ENCODE measurements at regions of chr4 and their contacts with region 1.

Region 1: DNA sequence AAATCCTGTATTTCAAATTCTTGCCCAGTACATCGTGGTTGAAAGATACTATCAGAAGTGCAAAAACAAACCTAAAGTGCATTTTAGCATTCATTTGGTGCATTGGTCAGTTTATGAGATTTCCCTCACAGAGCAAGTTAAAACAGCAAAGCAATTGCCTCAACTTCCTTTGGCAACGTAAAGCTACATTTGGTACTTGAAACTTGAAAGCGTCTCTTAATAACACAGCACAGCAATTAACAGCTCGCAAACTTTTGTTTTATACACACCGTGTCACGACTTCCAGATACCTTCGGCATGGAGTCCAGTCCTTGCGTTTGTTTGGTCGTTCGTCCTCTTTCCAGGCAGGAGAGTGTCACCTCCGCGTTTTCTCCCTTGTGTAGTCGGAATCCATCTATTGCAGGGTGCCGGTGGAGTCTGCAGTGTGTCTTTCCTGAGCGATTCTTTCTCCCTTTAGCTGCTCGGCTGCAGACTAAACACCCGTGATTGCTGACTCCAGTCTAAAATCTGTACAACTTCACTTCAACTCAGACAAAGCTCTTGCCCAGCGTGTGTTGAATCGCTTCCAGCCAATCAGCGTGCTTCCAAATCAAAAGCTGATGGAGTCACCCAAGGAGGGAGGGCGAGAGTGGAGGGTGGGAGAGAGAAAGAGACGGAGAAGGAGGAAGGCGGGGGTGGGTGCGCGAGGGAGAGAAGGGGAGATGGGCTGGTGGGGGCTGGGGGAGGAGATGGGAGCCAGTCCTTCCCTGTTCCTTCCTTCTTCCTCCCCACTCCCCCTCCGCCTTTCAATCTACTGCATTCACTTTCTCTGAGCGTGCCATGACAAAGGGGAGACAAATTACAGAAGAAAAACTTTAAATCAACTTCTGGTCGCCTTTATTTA is at the start of gene PCDH18:
- DNase-seq: peak; percentile 76
- H3K4me3 ChIP-seq: peak within 1 kb of the TSS; percentile 38 to 40
- H3K27ac ChIP-seq: peak within 1 kb of the TSS; percentile 59 to 77
- H3K4me1 ChIP-seq: no peaks in the 10 kb centered on the region
- H3K27me3 ChIP-seq: no peaks in the 10 kb centered on the region
- CTCF ChIP-seq: no peak
- POLR2A ChIP-seq: peak; percentile 29
- total RNA-seq, gene PCDH18: 12.3 to 28.0 TPM

Region 2: DNA sequence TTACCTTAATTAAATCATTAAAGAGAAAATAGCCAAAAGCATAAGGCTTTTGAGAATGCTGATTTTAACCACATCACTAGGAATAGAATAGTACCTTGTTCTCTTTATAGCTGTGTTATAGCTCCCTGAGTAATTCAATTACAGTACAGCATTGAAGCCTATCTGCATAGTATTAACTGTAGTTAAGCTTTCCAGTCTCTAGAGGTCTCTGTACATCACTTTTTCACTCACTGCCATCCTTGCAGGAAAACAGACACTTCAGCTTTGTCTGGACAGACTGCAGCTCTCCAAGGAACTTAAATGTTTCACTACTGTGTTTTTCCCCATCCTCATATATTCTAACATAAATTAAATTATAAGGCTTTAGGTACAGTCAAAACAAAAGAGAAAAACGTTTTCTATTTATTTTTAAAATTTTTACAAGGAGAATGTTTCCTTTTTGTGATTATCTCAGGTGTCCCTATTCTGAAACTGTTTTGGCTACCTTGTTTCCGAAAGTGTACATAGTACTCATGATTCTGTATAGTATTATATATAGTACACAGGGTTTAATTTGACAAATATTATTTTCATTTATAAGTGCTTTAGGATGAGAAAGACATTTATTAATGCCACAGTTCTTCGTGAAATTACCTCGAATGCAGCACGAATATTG is 407.8 kb before region 1 on chr4:
- intact Hi-C with region 1: loop called (anchors 10 kb)
- DNase-seq: no peak
- H3K4me3 ChIP-seq: peak overlapping the region in 1 of 2 donors; percentile 10
- H3K27ac ChIP-seq: no peak overlapping the region
- H3K4me1 ChIP-seq: no peaks in the 10 kb centered on the region
- H3K27me3 ChIP-seq: no peaks in the 10 kb centered on the region
- CTCF ChIP-seq: peak in 3 of 4 experiments; percentile 40 to 54 (median 53)
- POLR2A ChIP-seq: no peak

Region 3: GRCh38 chr4:137283737-137284136 is 248.5 kb before region 1 on chr4:
- intact Hi-C with region 1: loop called (anchors 10 kb)
- DNase-seq: no peak
- H3K4me3 ChIP-seq: no peak overlapping the region
- H3K27ac ChIP-seq: no peak overlapping the region
- H3K4me1 ChIP-seq: no peaks in the 10 kb centered on the region
- H3K27me3 ChIP-seq: no peaks in the 10 kb centered on the region
- CTCF ChIP-seq: peak in 2 of 4 experiments; percentile 17 to 25
- POLR2A ChIP-seq: no peak

Region 4: DNA sequence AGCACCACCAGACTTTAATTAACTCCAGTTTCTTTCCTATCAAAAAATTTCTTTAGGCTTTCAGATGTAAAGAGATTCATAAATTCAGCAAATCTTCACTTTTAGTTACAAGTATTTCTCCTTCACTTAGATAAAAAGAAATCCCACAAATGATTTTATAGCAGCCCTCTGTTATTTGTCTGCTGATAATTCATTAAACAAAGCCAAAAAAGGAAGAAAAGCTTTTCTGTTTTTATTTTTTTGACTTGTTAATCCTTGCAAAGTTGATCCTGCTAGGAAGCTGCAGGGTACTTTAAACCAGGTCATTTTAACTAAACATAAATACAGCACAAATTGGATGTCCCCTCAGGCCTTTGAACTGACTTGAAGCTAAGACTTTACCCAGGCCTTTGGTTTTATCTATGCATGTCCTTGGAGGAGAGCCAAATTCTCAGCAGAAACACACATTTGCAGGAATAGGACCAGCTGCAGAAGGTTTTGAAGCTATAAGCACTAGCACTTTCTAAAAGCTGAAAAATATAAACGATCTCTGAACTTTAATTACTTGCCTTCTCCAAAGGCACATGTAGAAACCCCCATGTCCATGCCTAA is 57.4 kb before region 1 on chr4:
- intact Hi-C with region 1: no loop called
- DNase-seq: no peak
- H3K4me3 ChIP-seq: no peak overlapping the region
- H3K27ac ChIP-seq: no peak overlapping the region
- H3K4me1 ChIP-seq: no peaks in the 10 kb centered on the region
- H3K27me3 ChIP-seq: no peaks in the 10 kb centered on the region
- CTCF ChIP-seq: no peak
- POLR2A ChIP-seq: no peak

Region 5: GRCh38 chr4:137664046-137664387 is 131.8 kb after region 1 on chr4:
- intact Hi-C with region 1: loop called (anchors 5 kb)
- DNase-seq: no peak
- H3K4me3 ChIP-seq: no peak overlapping the region
- H3K27ac ChIP-seq: peak overlapping the region; percentile 4 to 38
- H3K4me1 ChIP-seq: no peaks in the 10 kb centered on the region
- H3K27me3 ChIP-seq: no peaks in the 10 kb centered on the region
- CTCF ChIP-seq: no peak
- POLR2A ChIP-seq: no peak

Region 6: DNA sequence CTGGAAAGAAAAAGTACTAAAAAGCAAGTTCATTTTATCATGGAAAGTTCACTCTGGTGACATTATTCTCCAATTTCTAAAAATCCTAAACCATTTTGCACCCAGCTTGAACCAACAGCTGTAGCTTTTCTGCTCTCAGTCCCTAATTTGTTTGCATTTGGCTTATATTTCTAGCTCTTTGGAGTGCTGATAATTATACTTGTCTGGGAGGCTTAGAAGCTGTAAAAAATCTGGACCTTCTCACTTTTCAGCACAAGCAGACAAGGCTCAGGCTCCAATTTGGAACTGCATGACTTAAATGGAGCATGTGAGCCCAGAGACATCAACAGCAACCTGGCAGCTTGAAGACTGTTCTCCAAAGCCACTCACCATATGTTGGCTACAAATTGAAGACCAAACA is 171.0 kb after region 1 on chr4:
- intact Hi-C with region 1: loop called (anchors 5 kb)
- DNase-seq: no peak
- H3K4me3 ChIP-seq: no peak overlapping the region
- H3K27ac ChIP-seq: no peak overlapping the region
- H3K4me1 ChIP-seq: no peaks in the 10 kb centered on the region
- H3K27me3 ChIP-seq: no peaks in the 10 kb centered on the region
- CTCF ChIP-seq: no peak
- POLR2A ChIP-seq: no peak

Region 7: GRCh38 chr4:137812258-137812657 is 280.0 kb after region 1 on chr4:
- intact Hi-C with region 1: no loop called
- DNase-seq: no peak
- H3K4me3 ChIP-seq: no peak overlapping the region
- H3K27ac ChIP-seq: no peak overlapping the region
- H3K4me1 ChIP-seq: no peaks in the 10 kb centered on the region
- H3K27me3 ChIP-seq: no peaks in the 10 kb centered on the region
- CTCF ChIP-seq: no peak
- POLR2A ChIP-seq: no peak

Region 8: GRCh38 chr4:137896221-137896737 is 364.1 kb after region 1 on chr4:
- intact Hi-C with region 1: no loop called
- DNase-seq: no peak
- H3K4me3 ChIP-seq: no peak overlapping the region
- H3K27ac ChIP-seq: no peak overlapping the region
- H3K4me1 ChIP-seq: no peaks in the 10 kb centered on the region
- H3K27me3 ChIP-seq: no peaks in the 10 kb centered on the region
- CTCF ChIP-seq: no peak
- POLR2A ChIP-seq: no peak

Region 9: DNA sequence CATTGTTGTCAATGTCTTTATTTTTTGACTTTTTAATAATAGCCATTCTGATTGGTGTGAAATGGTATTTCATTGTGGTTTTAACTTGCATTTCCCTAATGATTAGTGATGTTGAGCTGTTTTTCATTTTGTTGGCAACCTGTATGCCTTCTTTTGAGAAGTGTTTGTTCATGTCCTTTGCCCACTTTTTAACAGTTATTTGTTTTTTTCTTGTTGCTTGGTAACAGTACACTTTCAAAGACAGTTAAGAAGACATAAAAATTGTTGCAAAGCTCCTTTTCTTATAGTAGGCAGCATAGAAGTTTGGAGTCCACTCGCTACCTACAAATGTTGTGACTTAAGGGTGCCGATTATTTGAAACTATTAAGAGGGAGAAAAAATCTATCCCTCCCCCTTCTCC is 758.6 kb after region 1 on chr4:
- intact Hi-C with region 1: no loop called
- DNase-seq: no peak
- H3K4me3 ChIP-seq: no peak overlapping the region
- H3K27ac ChIP-seq: no peak overlapping the region
- H3K4me1 ChIP-seq: no peaks in the 10 kb centered on the region
- H3K27me3 ChIP-seq: no peaks in the 10 kb centered on the region
- CTCF ChIP-seq: no peak
- POLR2A ChIP-seq: no peak